ENCODE measurements at regions of chr12 and their contacts with region 1.

Region 1: DNA sequence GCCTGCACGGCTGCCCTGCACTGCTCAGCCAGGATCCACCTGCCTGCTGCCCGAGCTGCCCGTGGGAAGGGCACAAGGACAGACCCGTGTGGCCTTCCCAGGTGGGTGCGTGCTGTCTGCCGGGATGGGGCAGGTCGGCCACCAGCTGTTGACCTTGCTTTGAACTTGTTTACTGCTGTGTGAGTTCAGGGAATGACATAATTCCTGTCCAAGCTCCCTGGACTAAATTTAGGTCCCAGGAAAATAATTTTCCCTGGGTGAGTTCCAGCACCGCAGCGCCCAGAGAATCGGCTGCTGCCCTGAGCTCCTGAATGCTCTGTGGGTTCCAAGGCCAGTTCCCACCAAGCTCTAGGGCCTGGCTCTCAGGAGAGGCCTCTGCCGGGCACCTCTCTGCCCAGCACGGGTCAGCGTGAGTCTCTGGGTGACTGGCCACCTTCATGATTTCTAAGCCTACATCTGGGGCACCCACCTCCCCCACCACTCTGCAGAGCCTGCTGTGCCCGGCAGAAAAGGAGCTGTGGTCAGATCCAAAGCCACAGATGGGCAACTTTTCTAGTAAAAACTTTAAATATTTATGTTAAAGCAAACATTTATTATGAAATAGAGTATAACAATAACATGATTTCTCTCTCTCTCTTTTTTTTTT is 27.2 kb upstream of the MLXIP start:
- DNase-seq: no peak
- H3K4me3 ChIP-seq: no peak overlapping the region
- H3K27me3 ChIP-seq: no peaks in the 10 kb centered on the region
- CTCF ChIP-seq: no peak

Region 2: GRCh38 chr12:121916719-121917118 is 134.6 kb before region 1 on chr12:
- CTCF ChIA-PET with region 1: interaction called, 10 read pairs
- POLR2A ChIA-PET with region 1: no interaction called
- DNase-seq: no peak
- H3K4me3 ChIP-seq: no peak overlapping the region
- H3K27me3 ChIP-seq: no peaks in the 10 kb centered on the region
- CTCF ChIP-seq: peak; percentile 38

Region 3: GRCh38 chr12:122078141-122079032 is 27.0 kb after region 1 on chr12 and contains the start of gene MLXIP:
- CTCF ChIA-PET with region 1: interaction called, 14 read pairs
- POLR2A ChIA-PET with region 1: no interaction called
- DNase-seq: no peak
- H3K4me3 ChIP-seq: peak within 1 kb of the TSS; percentile 69
- H3K27me3 ChIP-seq: no peaks in the 10 kb centered on the region
- CTCF ChIP-seq: no peak
- polyA plus RNA-seq, gene MLXIP: 3.3 and 4.8 TPM in 2 replicates

Region 4: GRCh38 chr12:122123051-122123760 is 71.9 kb after region 1 on chr12:
- CTCF ChIA-PET with region 1: interaction called, 207 read pairs
- POLR2A ChIA-PET with region 1: no interaction called
- DNase-seq: no peak
- H3K4me3 ChIP-seq: no peak overlapping the region
- H3K27me3 ChIP-seq: no peaks in the 10 kb centered on the region
- CTCF ChIP-seq: peak; percentile 71

Region 5: DNA sequence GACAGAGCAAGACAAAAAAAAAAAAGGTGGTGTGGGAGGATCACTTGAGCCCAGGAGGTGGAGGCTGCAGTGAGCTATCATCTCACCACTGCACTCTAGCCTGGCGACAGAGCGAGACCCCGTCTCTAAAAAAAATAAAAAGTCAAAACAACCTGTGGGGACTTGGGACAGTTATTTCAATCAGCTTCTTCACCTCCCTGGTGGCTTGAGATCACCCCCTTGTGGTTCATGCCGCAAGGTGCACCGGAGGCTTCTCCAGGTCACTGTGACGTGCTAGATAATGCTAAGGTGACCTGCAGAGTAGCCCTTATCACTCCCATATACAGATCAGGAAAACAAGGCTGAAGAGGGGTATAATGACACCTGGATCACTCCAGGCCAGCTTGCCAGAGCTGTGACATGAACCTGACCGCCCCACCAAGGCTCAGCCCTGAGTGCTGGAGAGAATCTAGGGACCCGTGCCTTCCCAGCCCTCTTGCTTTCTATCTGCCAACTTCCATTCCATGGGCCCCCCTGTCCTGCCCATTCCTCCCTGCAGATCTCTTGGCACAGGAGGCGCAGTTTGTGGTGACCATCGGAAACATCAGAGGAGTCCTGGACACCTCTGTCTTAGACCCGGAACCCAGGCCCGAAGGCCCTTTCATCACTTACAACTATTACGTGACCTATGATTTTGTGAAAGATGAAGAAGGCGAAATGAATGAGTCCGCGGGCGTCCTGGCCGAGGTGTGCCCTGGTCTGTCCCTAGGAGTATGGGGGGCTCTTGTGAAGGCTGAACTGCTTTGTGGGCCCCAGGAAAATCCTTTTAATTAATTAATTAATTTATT is 139.7 kb after region 1 on chr12:
- CTCF ChIA-PET with region 1: interaction called, 17 read pairs
- POLR2A ChIA-PET with region 1: interaction called, 4 read pairs
- DNase-seq: no peak
- H3K4me3 ChIP-seq: no peak overlapping the region
- H3K27me3 ChIP-seq: no peaks in the 10 kb centered on the region
- CTCF ChIP-seq: peak; percentile 85